Motor neuron (in vitro differentiated cells): ENCODE measurements at regions of chr10 and their contacts with region 1.

Region 1: GRCh38 chr10:112183329-112184051 is at the start of gene GPAM:
- ATAC-seq: peak; percentile 94 to 99 (median 96)
- H3K4me3 ChIP-seq: peak within 1 kb of the TSS; percentile 77 to 90 (median 83)
- H3K27ac ChIP-seq: peak within 1 kb of the TSS; percentile 72 to 84
- H3K4me1 ChIP-seq: peaks cover 6 to 7% of the 10 kb centered on the region in 2 donors
- total RNA-seq, gene GPAM: 10.4 to 103 (median 14.1) TPM

Region 2: DNA sequence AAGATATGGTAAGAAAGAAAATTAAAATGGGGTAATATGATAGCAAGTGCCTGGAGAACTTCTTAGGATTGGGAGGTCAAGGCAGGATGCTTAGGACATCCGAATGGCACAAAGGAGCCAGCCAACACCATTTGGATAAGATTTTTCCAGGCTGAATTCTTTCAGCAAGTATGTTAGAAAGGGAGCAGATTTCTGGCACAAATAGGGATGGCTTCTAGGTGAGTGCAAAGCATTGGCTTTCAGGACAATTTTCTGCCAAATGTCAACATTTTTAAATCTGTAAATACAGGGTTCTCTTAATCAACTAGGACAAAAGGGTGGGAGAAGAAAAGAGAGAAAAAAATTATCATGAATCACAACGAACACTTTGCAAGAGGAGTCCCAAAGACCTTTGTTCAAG is 409.0 kb before region 1 on chr10:
- in situ Hi-C with region 1: no loop called
- ATAC-seq: no peak
- H3K4me3 ChIP-seq: no peak overlapping the region
- H3K27ac ChIP-seq: no peak overlapping the region
- H3K4me1 ChIP-seq: no peaks in the 10 kb centered on the region

Region 3: GRCh38 chr10:111840546-111840945 is 342.9 kb before region 1 on chr10:
- in situ Hi-C with region 1: no loop called
- ATAC-seq: no peak
- H3K4me3 ChIP-seq: no peak overlapping the region
- H3K27ac ChIP-seq: no peak overlapping the region
- H3K4me1 ChIP-seq: peaks cover 0 to 3% of the 10 kb centered on the region in 2 donors

Region 4: DNA sequence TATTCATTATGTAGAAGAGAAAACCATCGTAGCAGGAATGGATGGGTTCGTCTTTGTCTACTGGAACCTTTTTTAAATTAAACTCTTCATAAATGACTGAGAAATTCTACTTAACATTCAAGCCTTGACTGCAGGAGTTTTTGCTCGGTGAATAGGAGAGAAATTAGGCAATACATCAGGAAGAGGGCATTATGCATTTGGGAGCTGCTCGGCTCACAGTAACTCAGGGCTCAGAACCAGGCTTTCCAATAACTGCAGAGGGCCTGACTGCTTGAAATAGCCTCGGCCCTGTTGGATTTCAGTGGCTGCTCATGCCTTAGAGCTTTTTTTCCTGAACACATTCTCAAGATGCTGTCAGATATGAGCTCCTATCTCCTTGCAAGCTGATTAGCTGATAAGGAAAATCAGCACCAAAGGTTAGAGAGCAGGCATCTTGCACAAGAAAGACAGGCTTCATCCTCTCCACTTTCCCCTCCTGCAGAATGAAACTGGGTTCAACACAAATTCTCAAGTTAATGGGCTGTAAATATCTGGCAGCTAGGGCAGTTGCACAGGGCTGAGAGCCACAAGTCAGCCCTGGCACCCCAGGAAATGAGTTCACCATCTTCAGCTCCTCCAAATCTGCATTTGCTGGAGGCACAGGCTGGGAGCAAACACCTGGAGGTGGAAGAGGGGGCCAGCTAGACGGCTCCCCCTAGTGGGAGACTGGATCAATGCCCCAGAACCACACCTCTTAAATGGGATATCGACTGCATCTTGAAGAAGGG is 124.1 kb after region 1 on chr10:
- in situ Hi-C with region 1: loop called in 2 of 9 experiments (anchors 10 to 25 kb)
- ATAC-seq: peak; percentile 39 to 92 (median 64)
- H3K4me3 ChIP-seq: no peak overlapping the region
- H3K27ac ChIP-seq: peak overlapping the region in 1 of 2 donors; percentile 42
- H3K4me1 ChIP-seq: peaks cover 3 to 14% of the 10 kb centered on the region in 2 donors

Region 5: GRCh38 chr10:112446855-112447711 is 263.6 kb after region 1 on chr10 and contains the starts of genes VTI1A and ZDHHC6:
- in situ Hi-C with region 1: loop called in 1 of 9 experiments (anchors 25 kb)
- ATAC-seq: peak; percentile 91 to 99 (median 98)
- H3K4me3 ChIP-seq: peak within 1 kb of the TSS; percentile 91 to 99 (median 97)
- H3K27ac ChIP-seq: peak within 1 kb of the TSS; percentile 97
- H3K4me1 ChIP-seq: peaks cover 5 to 17% of the 10 kb centered on the region in 2 donors
- total RNA-seq, gene VTI1A: 29.8 to 55.3 (median 42.6) TPM
- total RNA-seq, gene ZDHHC6: 18.5 to 37.3 (median 27.2) TPM